Activated naive CD4-positive, alpha-beta T cell treated with anti-CD3 and anti-CD28 coated beads for 36 hours (primary cell): ENCODE measurements at regions of chr6 and their contacts with region 1.

Region 1: DNA sequence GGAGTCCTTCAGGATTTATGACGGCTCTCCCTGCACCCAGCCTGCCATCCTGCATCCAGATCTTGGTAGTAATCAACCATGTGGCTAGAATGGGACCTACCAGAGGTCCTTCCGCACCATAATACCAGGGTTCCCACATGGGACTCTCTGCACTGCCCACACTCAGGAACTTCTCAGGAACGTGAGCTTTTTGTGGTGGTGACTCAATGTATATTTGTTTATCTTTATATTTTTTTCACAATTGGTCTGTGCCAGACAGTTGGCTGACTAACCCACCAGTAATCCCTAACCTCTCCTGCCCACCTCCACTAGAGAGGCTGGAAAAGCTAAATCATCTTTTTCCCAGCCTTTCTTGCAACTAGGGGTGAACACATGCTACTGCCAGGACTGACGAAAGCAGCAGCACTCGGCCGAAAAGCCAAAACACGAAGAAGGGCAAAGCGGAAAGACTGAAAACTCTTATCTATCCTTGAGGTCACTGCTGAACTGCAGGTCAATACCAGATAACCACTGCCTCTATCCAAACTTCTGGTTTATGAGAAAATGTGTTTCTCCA is 113.0 kb downstream of the TRERF1 start:
- DNase-seq: peak; percentile 19
- H3K4me3 Mint-ChIP-seq: peak overlapping the region; percentile 5
- H3K27ac Mint-ChIP-seq: peak overlapping the region; percentile 64
- H3K4me1 Mint-ChIP-seq: peaks cover 49% of the 10 kb centered on the region
- H3K27me3 Mint-ChIP-seq: no peaks in the 10 kb centered on the region

Region 2: DNA sequence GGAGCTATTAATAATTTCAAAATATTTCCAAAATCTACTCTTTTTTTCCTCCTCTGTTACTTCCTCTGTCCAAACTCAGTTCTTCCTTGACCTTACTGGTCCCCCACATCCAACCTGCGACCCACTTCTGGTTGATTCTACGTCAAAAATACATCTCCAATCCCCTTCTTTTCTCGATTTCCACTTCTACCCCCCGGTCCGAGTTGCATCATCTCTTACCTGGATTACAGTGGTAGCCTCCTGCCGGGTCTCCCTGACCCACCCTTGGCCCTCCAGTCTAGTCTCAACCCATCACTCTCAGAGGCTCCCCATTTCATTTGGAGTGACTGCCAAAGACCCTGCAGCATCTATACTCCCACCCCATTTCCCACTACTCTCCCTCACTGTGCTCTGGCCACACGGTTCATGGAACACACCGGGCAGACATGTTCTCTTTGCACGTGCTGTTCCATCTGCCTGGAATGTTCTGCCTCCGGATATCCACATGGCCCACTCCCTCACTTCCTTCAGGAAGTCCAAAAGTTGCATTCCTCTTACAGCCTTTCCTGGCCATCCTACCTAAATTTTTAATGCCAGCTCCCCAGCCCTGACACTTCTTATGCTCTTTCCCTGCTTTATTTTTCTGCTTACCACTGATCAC is 391.0 kb before region 1 on chr6:
- CTCF ChIA-PET with region 1: no interaction called
- intact Hi-C with region 1: no loop called
- DNase-seq: no peak
- H3K4me3 Mint-ChIP-seq: no peak overlapping the region
- H3K27ac Mint-ChIP-seq: peak overlapping the region; percentile 68
- H3K4me1 Mint-ChIP-seq: peaks cover 62% of the 10 kb centered on the region
- H3K27me3 Mint-ChIP-seq: no peaks in the 10 kb centered on the region

Region 3: GRCh38 chr6:42200035-42200434 is 138.7 kb before region 1 on chr6:
- CTCF ChIA-PET with region 1: no interaction called
- intact Hi-C with region 1: no loop called
- DNase-seq: no peak
- H3K4me3 Mint-ChIP-seq: no peak overlapping the region
- H3K27ac Mint-ChIP-seq: no peak overlapping the region
- H3K4me1 Mint-ChIP-seq: no peaks in the 10 kb centered on the region
- H3K27me3 Mint-ChIP-seq: no peaks in the 10 kb centered on the region

Region 4: GRCh38 chr6:42315991-42316378 is 22.8 kb before region 1 on chr6:
- CTCF ChIA-PET with region 1: no interaction called
- intact Hi-C with region 1: loop called (anchors 2 kb)
- DNase-seq: no peak
- H3K4me3 Mint-ChIP-seq: no peak overlapping the region
- H3K27ac Mint-ChIP-seq: no peak overlapping the region
- H3K4me1 Mint-ChIP-seq: peaks cover 51% of the 10 kb centered on the region
- H3K27me3 Mint-ChIP-seq: no peaks in the 10 kb centered on the region

Region 5: GRCh38 chr6:42367353-42368011 is 28.7 kb after region 1 on chr6:
- CTCF ChIA-PET with region 1: no interaction called
- intact Hi-C with region 1: loop called (anchors 1 kb)
- DNase-seq: peak; percentile 49
- H3K4me3 Mint-ChIP-seq: peak overlapping the region; percentile 52
- H3K27ac Mint-ChIP-seq: peak overlapping the region; percentile 84
- H3K4me1 Mint-ChIP-seq: peaks cover 53% of the 10 kb centered on the region
- H3K27me3 Mint-ChIP-seq: no peaks in the 10 kb centered on the region

Region 6: GRCh38 chr6:42402184-42402583 is 63.4 kb after region 1 on chr6:
- CTCF ChIA-PET with region 1: no interaction called
- intact Hi-C with region 1: loop called (anchors 1 kb)
- DNase-seq: peak; percentile 85
- H3K4me3 Mint-ChIP-seq: no peak overlapping the region
- H3K27ac Mint-ChIP-seq: peak overlapping the region; percentile 50
- H3K4me1 Mint-ChIP-seq: peaks cover 65% of the 10 kb centered on the region
- H3K27me3 Mint-ChIP-seq: no peaks in the 10 kb centered on the region

Region 7: GRCh38 chr6:42520786-42521607 is 182.3 kb after region 1 on chr6:
- CTCF ChIA-PET with region 1: no interaction called
- intact Hi-C with region 1: loop called (anchors 1 kb)
- DNase-seq: peak; percentile 56
- H3K4me3 Mint-ChIP-seq: no peak overlapping the region
- H3K27ac Mint-ChIP-seq: peak overlapping the region; percentile 38
- H3K4me1 Mint-ChIP-seq: peaks cover 18% of the 10 kb centered on the region
- H3K27me3 Mint-ChIP-seq: no peaks in the 10 kb centered on the region